ENCODE measurements at regions of chr2 and their contacts with region 1.

Region 1: GRCh38 chr2:61135510-61135909 is 26.5 kb upstream of the C2orf74 start:
- DNase-seq: peak in 3 of 9 donors; percentile 4 to 19 (median 13)
- ATAC-seq: no peak
- H3K4me3 ChIP-seq: no peak overlapping the region
- H3K4me3 Mint-ChIP-seq: no peak overlapping the region
- H3K27ac ChIP-seq: no peak overlapping the region
- H3K27ac Mint-ChIP-seq: no peak overlapping the region
- H3K4me1 ChIP-seq: no peaks in the 10 kb centered on the region
- H3K4me1 Mint-ChIP-seq: peaks cover 0 to 6% (median 1%) of the 10 kb centered on the region in 7 donors
- H3K27me3 ChIP-seq: no peaks in the 10 kb centered on the region
- H3K27me3 Mint-ChIP-seq: peaks cover 0 to 11% (median 0%) of the 10 kb centered on the region in 5 donors

Region 2: GRCh38 chr2:61340242-61340641 is 204.7 kb after region 1 on chr2:
- CTCF ChIA-PET with region 1: no interaction called
- POLR2A ChIA-PET with region 1: no interaction called
- intact Hi-C with region 1: no loop called
- DNase-seq: no peak
- ATAC-seq: no peak
- H3K4me3 ChIP-seq: no peak overlapping the region
- H3K4me3 Mint-ChIP-seq: no peak overlapping the region
- H3K27ac ChIP-seq: no peak overlapping the region
- H3K27ac Mint-ChIP-seq: no peak overlapping the region
- H3K4me1 ChIP-seq: no peaks in the 10 kb centered on the region
- H3K4me1 Mint-ChIP-seq: peaks cover 0 to 6% (median 0%) of the 10 kb centered on the region in 7 donors
- H3K27me3 ChIP-seq: no peaks in the 10 kb centered on the region
- H3K27me3 Mint-ChIP-seq: no peaks in the 10 kb centered on the region

Region 3: GRCh38 chr2:61633250-61633649 is 497.7 kb after region 1 on chr2:
- CTCF ChIA-PET with region 1: no interaction called
- POLR2A ChIA-PET with region 1: no interaction called
- intact Hi-C with region 1: loop called in 1 of 2 experiments (anchors 1 kb)
- DNase-seq: no peak
- ATAC-seq: no peak
- H3K4me3 ChIP-seq: no peak overlapping the region
- H3K4me3 Mint-ChIP-seq: no peak overlapping the region
- H3K27ac ChIP-seq: no peak overlapping the region
- H3K27ac Mint-ChIP-seq: peak overlapping the region in 1 of 9 donors; percentile 10
- H3K4me1 ChIP-seq: no peaks in the 10 kb centered on the region
- H3K4me1 Mint-ChIP-seq: no peaks in the 10 kb centered on the region
- H3K27me3 ChIP-seq: no peaks in the 10 kb centered on the region
- H3K27me3 Mint-ChIP-seq: peaks cover 0 to 3% (median 0%) of the 10 kb centered on the region in 5 donors

Region 4: DNA sequence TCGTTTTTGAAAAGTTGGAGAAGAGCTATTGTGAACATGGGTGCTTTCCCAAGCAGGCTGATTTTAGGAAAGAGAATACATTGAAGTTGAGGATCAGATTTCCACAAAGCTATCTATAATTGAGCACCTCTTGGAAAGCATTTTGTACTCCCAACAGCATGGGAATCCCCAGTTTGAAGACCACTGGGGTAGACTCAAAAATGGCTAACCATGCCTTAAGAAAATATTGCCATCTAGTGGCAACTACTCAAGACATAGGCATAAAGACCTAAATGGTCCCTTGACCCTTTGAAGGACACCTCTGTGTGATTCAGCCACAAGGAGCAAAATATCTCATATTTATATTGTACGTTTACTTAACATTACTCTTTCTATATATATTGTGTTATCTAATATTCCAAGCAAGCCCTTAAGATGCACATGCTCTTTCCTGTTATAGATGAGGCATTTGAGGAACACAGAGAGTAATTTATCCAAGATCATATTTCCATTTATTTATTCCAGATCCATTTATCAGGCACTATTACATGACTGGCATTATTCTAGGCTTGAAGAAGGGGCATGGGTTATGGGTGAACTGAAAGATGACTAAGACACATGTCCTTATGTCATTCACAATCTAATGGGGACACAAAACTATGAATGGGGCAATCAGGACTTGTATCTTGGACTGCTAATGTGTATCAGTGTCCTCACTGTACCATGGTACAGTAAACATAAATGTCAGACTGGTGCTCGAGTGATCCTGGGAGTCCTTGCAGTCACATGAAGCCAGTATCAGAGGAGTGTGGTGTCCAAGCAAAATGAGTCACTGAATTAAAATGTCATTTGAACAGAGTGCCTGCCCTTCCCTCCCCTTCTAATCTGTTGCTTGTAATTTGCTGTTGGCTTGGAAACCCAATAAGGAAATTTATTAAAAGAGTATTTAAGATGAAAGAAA is 523.6 kb after region 1 on chr2:
- CTCF ChIA-PET with region 1: interaction called, 3 read pairs
- POLR2A ChIA-PET with region 1: no interaction called
- intact Hi-C with region 1: loop called (anchors 1 to 5 kb)
- DNase-seq: peak in 1 of 9 donors; percentile 9
- ATAC-seq: no peak
- H3K4me3 ChIP-seq: no peak overlapping the region
- H3K4me3 Mint-ChIP-seq: no peak overlapping the region
- H3K27ac ChIP-seq: no peak overlapping the region
- H3K27ac Mint-ChIP-seq: no peak overlapping the region
- H3K4me1 ChIP-seq: peaks cover 0 to 19% of the 10 kb centered on the region in 2 donors
- H3K4me1 Mint-ChIP-seq: peaks cover 0 to 5% (median 0%) of the 10 kb centered on the region in 7 donors
- H3K27me3 ChIP-seq: no peaks in the 10 kb centered on the region
- H3K27me3 Mint-ChIP-seq: peaks cover 0 to 5% (median 0%) of the 10 kb centered on the region in 5 donors

Region 5: GRCh38 chr2:61898810-61899209 is 763.3 kb after region 1 on chr2:
- CTCF ChIA-PET with region 1: interaction called, 3 read pairs
- POLR2A ChIA-PET with region 1: no interaction called
- intact Hi-C with region 1: loop called in 1 of 2 experiments (anchors 2 kb)
- DNase-seq: peak in 1 of 9 donors; percentile 13
- ATAC-seq: peak; percentile 40
- H3K4me3 ChIP-seq: no peak overlapping the region
- H3K4me3 Mint-ChIP-seq: no peak overlapping the region
- H3K27ac ChIP-seq: no peak overlapping the region
- H3K27ac Mint-ChIP-seq: no peak overlapping the region
- H3K4me1 ChIP-seq: no peaks in the 10 kb centered on the region
- H3K4me1 Mint-ChIP-seq: peaks cover 0 to 2% (median 0%) of the 10 kb centered on the region in 7 donors
- H3K27me3 ChIP-seq: no peaks in the 10 kb centered on the region
- H3K27me3 Mint-ChIP-seq: peaks cover 0 to 4% (median 0%) of the 10 kb centered on the region in 5 donors

Region 6: GRCh38 chr2:62415019-62415431 is 1279.5 kb after region 1 on chr2:
- CTCF ChIA-PET with region 1: no interaction called
- POLR2A ChIA-PET with region 1: no interaction called
- intact Hi-C with region 1: loop called in 1 of 2 experiments (anchors 10 kb)
- DNase-seq: no peak
- ATAC-seq: peak; percentile 29
- H3K4me3 ChIP-seq: no peak overlapping the region
- H3K4me3 Mint-ChIP-seq: peak overlapping the region in 1 of 10 donors; percentile 15
- H3K27ac ChIP-seq: no peak overlapping the region
- H3K27ac Mint-ChIP-seq: peak overlapping the region in 2 of 9 donors; percentile 19 to 23
- H3K4me1 ChIP-seq: peaks cover 0 to 7% of the 10 kb centered on the region in 2 donors
- H3K4me1 Mint-ChIP-seq: peaks cover 0 to 14% (median 0%) of the 10 kb centered on the region in 7 donors
- H3K27me3 ChIP-seq: no peaks in the 10 kb centered on the region
- H3K27me3 Mint-ChIP-seq: peaks cover 0 to 10% (median 5%) of the 10 kb centered on the region in 5 donors